A549 (cell line): ENCODE measurements at regions of chr19 and their contacts with region 1.

Region 1: DNA sequence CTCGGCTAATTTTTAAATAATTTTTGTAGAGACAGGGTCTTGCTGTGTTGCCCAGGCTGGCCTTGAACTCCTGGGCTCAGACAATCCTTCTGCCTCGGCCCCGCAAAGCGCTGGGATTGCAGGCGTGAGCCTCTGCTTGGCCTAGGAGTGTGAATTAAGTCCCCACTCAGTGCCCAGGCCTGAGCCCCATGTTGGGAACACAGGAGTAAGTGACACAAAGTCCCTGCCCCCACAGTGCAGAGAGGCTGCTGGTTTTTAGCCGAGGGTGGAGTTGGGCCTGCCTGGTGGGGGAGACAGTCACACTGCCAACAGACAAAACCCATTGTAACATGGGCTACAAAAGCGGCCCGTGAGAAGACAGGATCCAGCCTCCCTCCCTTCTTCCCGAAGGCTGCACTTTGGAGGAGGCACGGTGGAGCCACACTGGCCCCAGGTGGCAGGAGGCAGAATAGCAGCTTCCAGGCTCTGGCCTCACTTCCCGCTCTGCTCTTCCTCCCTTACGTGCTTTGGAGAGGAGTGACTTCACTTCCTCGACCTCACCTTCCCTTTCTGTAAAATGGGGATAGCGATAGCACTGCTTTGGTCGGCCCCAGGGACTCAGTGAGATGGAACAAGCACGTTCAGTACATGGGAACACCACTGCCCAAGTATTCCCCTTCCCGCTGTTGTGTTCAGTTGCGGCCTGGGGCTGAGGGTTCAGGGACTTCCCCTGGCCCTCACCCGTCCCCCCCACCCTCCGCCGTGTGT is 15.2 kb upstream of the EHD2 start:
- DNase-seq: peak; percentile 90 to 94
- ATAC-seq: peak; percentile 80 to 88
- H3K4me3 ChIP-seq: no peak overlapping the region
- H3K27ac ChIP-seq: peak overlapping the region; percentile 59 to 77; a peak in 5 of 6 replicates
- H3K4me1 ChIP-seq: peaks cover 4% of the 10 kb centered on the region
- CTCF ChIP-seq: peak; percentile 97
- EP300 ChIP-seq: no peak
- POLR2A ChIP-seq: no peak
- RAD21 ChIP-seq: peak; percentile 98 to 100

Region 2: GRCh38 chr19:47428177-47428894 is 269.7 kb before region 1 on chr19:
- CTCF ChIA-PET with region 1: interaction called, 901 read pairs
- POLR2A ChIA-PET with region 1: no interaction called
- DNase-seq: peak; percentile 95 to 98
- ATAC-seq: peak; percentile 75 to 85
- H3K4me3 ChIP-seq: peak overlapping the region; percentile 42
- H3K27ac ChIP-seq: peak overlapping the region in 1 of 2 experiments; percentile 43; a peak in 2 of 6 replicates
- H3K4me1 ChIP-seq: peaks cover 20% of the 10 kb centered on the region
- CTCF ChIP-seq: no peak
- EP300 ChIP-seq: no peak
- POLR2A ChIP-seq: no peak
- RAD21 ChIP-seq: no peak

Region 3: DNA sequence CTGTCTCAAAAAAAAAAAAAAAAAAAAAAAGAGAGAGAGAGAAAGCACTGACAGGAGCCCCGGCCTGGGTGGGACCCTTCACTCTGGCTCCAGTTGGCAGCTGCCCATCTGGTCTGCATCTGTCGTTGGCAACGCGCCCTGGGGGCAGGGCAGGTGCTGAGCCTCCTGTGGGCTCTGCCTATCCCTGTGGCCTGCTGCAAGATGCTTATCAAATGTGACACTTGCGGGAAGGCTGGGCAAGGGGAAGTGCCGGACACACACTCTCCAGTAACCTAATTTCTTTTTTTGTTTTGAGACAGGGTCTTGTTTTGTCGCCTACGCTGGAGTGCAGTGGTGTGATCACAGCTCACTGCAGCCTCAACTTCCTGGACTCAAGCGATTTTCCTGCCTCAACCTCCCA is 203.3 kb before region 1 on chr19:
- CTCF ChIA-PET with region 1: interaction called, 26 read pairs
- POLR2A ChIA-PET with region 1: no interaction called
- DNase-seq: no peak
- ATAC-seq: no peak
- H3K4me3 ChIP-seq: no peak overlapping the region
- H3K27ac ChIP-seq: no peak overlapping the region
- H3K4me1 ChIP-seq: no peaks in the 10 kb centered on the region
- CTCF ChIP-seq: no peak
- EP300 ChIP-seq: no peak
- POLR2A ChIP-seq: no peak
- RAD21 ChIP-seq: no peak

Region 4: GRCh38 chr19:47608074-47608918 is 89.7 kb before region 1 on chr19:
- CTCF ChIA-PET with region 1: interaction called, 27 read pairs
- POLR2A ChIA-PET with region 1: no interaction called
- DNase-seq: peak; percentile 94
- ATAC-seq: peak; percentile 85 to 93
- H3K4me3 ChIP-seq: peak overlapping the region; percentile 92
- H3K27ac ChIP-seq: peak overlapping the region; percentile 93 to 96
- H3K4me1 ChIP-seq: peaks cover 21% of the 10 kb centered on the region
- CTCF ChIP-seq: no peak
- EP300 ChIP-seq: no peak
- POLR2A ChIP-seq: peak; percentile 73
- RAD21 ChIP-seq: no peak

Region 5: DNA sequence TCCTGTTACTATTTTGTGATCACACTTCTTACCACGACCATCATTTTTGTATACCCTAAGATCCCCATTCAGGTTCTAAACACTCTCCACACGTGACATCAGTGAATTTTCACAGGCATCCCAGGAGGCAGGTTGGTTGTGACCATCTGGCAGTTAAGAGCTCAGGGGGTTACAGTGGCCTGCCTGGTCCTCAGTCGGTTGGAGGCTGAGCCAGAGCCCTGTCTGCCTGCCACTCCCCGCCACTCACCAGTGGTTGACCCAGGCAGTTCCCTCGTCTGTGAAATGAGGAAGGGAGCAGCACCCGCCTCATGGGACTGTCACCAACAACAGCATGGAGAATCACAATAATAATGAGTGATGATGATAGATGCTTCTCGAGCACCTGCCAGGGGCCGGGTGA is 21.2 kb before region 1 on chr19:
- CTCF ChIA-PET with region 1: interaction called, 14 read pairs
- POLR2A ChIA-PET with region 1: no interaction called
- DNase-seq: no peak
- ATAC-seq: no peak
- H3K4me3 ChIP-seq: no peak overlapping the region
- H3K27ac ChIP-seq: no peak overlapping the region
- H3K4me1 ChIP-seq: no peaks in the 10 kb centered on the region
- CTCF ChIP-seq: no peak
- EP300 ChIP-seq: no peak
- POLR2A ChIP-seq: no peak
- RAD21 ChIP-seq: no peak

Region 6: GRCh38 chr19:47790398-47790814 is 92.4 kb after region 1 on chr19:
- CTCF ChIA-PET with region 1: interaction called, 44 read pairs
- POLR2A ChIA-PET with region 1: no interaction called
- DNase-seq: peak; percentile 85 to 94
- ATAC-seq: peak; percentile 91
- H3K4me3 ChIP-seq: no peak overlapping the region
- H3K27ac ChIP-seq: no peak overlapping the region
- H3K4me1 ChIP-seq: no peaks in the 10 kb centered on the region
- CTCF ChIP-seq: peak; percentile 86
- EP300 ChIP-seq: no peak
- POLR2A ChIP-seq: no peak
- RAD21 ChIP-seq: peak; percentile 28 to 46; a peak in 2 of 5 replicates